MCF 10A (cell line): ENCODE measurements at regions of chr3 and their contacts with region 1.

Region 1: GRCh38 chr3:149224736-149225594 is 3.3 kb upstream of the CP start:
- DNase-seq: peak; percentile 87
- H3K4me3 Mint-ChIP-seq: peak overlapping the region; percentile 84
- H3K27ac Mint-ChIP-seq: peak overlapping the region; percentile 98
- H3K4me1 Mint-ChIP-seq: peaks cover 18% of the 10 kb centered on the region
- H3K27me3 Mint-ChIP-seq: no peaks in the 10 kb centered on the region
- CTCF ChIP-seq: no peak

Region 2: GRCh38 chr3:149167898-149168297 is 57.1 kb before region 1 on chr3:
- CTCF ChIA-PET with region 1: no interaction called
- POLR2A ChIA-PET with region 1: no interaction called
- intact Hi-C with region 1: no loop called
- DNase-seq: no peak
- H3K4me3 Mint-ChIP-seq: no peak overlapping the region
- H3K27ac Mint-ChIP-seq: no peak overlapping the region
- H3K4me1 Mint-ChIP-seq: no peaks in the 10 kb centered on the region
- H3K27me3 Mint-ChIP-seq: no peaks in the 10 kb centered on the region
- CTCF ChIP-seq: no peak

Region 3: GRCh38 chr3:149180057-149180573 is 44.9 kb before region 1 on chr3:
- CTCF ChIA-PET with region 1: no interaction called
- POLR2A ChIA-PET with region 1: interaction called, 41 read pairs
- intact Hi-C with region 1: loop called (anchors 2 kb)
- DNase-seq: peak; percentile 100
- H3K4me3 Mint-ChIP-seq: no peak overlapping the region
- H3K27ac Mint-ChIP-seq: no peak overlapping the region
- H3K4me1 Mint-ChIP-seq: peaks cover 6% of the 10 kb centered on the region
- H3K27me3 Mint-ChIP-seq: no peaks in the 10 kb centered on the region
- CTCF ChIP-seq: no peak

Region 4: DNA sequence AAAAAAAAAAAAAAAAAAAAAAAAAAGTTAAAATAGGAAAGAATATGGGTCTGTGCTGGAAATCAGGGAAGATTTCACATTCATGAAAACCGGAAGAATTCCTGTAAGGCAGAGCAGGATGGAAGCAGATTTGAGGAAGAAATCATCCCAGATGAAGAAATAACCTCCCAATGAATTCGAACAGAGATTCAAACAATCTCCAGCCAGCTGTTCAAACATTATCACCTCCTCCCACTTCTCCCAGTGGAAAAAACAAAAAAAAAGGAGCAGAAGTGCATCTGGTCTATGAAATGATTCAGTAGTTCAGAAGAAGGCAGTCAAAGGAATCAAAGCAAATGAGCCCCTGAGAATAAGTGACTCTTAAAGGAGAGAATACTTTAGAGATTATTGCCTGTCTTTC is 36.5 kb before region 1 on chr3:
- CTCF ChIA-PET with region 1: no interaction called
- POLR2A ChIA-PET with region 1: interaction called, 10 read pairs
- intact Hi-C with region 1: no loop called
- DNase-seq: no peak
- H3K4me3 Mint-ChIP-seq: no peak overlapping the region
- H3K27ac Mint-ChIP-seq: no peak overlapping the region
- H3K4me1 Mint-ChIP-seq: peaks cover 7% of the 10 kb centered on the region
- H3K27me3 Mint-ChIP-seq: no peaks in the 10 kb centered on the region
- CTCF ChIP-seq: no peak

Region 5: DNA sequence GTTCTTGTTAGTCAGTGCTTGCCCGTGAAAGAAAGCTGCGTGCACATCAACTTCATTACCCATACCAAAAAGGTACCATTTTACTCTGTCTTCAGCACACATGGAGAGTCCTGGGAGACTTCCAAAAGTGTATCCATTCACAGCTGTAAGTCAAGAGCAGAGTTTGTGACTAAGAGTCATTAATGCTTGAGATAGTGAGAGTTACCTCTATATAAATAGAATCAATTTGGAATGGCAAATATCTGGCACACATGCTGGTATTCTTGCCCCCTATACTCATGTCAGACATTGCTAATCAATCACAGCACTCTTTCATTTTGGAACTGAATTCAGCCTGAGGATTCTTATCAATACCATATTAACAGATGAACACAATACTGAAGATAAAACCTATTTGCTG is 17.5 kb before region 1 on chr3:
- CTCF ChIA-PET with region 1: interaction called, 3 read pairs
- POLR2A ChIA-PET with region 1: interaction called, 14 read pairs
- intact Hi-C with region 1: no loop called
- DNase-seq: no peak
- H3K4me3 Mint-ChIP-seq: no peak overlapping the region
- H3K27ac Mint-ChIP-seq: no peak overlapping the region
- H3K4me1 Mint-ChIP-seq: no peaks in the 10 kb centered on the region
- H3K27me3 Mint-ChIP-seq: no peaks in the 10 kb centered on the region
- CTCF ChIP-seq: no peak

Region 6: DNA sequence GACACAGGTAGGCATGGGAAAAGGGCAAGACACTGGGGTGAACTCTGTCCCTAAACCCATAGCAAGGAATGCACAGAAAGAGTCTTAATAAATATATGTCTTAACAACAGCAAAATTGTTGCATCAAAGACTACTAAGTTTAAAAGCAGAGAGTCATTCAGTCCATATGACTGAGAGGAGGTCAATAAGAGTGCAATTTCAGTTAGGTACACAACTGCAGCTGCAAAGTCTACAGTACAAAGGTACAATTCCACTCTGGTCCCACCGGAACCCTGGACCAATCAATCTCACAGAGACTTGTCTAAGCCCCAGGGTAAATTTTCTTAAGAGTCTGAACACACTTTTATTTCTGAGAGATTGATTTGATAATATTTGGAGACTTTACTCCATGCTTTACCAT is 10.3 kb before region 1 on chr3:
- CTCF ChIA-PET with region 1: interaction called, 3 read pairs
- POLR2A ChIA-PET with region 1: interaction called, 14 read pairs
- intact Hi-C with region 1: no loop called
- DNase-seq: no peak
- H3K4me3 Mint-ChIP-seq: no peak overlapping the region
- H3K27ac Mint-ChIP-seq: no peak overlapping the region
- H3K4me1 Mint-ChIP-seq: no peaks in the 10 kb centered on the region
- H3K27me3 Mint-ChIP-seq: no peaks in the 10 kb centered on the region
- CTCF ChIP-seq: no peak

Region 7: GRCh38 chr3:149245738-149246451 is 20.9 kb after region 1 on chr3:
- CTCF ChIA-PET with region 1: no interaction called
- POLR2A ChIA-PET with region 1: interaction called, 18 read pairs
- intact Hi-C with region 1: no loop called
- DNase-seq: peak; percentile 73
- H3K4me3 Mint-ChIP-seq: peak overlapping the region; percentile 52
- H3K27ac Mint-ChIP-seq: peak overlapping the region; percentile 85
- H3K4me1 Mint-ChIP-seq: peaks cover 29% of the 10 kb centered on the region
- H3K27me3 Mint-ChIP-seq: no peaks in the 10 kb centered on the region
- CTCF ChIP-seq: no peak

Region 8: GRCh38 chr3:149417174-149417573 is 192.2 kb after region 1 on chr3:
- CTCF ChIA-PET with region 1: no interaction called
- POLR2A ChIA-PET with region 1: no interaction called
- intact Hi-C with region 1: no loop called
- DNase-seq: no peak
- H3K4me3 Mint-ChIP-seq: no peak overlapping the region
- H3K27ac Mint-ChIP-seq: no peak overlapping the region
- H3K4me1 Mint-ChIP-seq: peaks cover 12% of the 10 kb centered on the region
- H3K27me3 Mint-ChIP-seq: no peaks in the 10 kb centered on the region
- CTCF ChIP-seq: no peak